Posterior vena cava (tissue), 2 donors: ENCODE measurements at regions of chr12 and their contacts with region 1.

Region 1: GRCh38 chr12:111699-112493 is 45.3 kb downstream of the IQSEC3 start:
- DNase-seq: peak; percentile 37

Region 2: DNA sequence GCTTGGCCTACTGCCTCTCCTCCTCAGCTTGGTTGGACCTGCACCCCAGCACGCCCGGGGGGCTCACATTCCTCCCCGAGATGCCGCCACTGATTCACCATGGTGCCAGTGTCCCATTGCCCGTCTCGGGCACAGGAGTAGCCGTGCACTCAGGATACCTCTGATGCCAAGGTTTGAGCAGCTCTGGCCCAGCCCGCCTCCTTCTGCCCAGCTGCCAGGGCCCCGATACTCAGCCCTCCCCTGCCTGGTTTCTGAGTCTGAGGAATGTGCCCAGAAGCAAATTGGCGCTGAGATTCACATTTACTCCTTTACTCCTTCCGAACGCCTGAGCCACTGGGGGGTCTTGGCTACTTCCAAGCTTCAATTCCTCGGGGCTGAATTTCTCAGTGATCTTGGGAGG is 487.9 kb after region 1 on chr12:
- intact Hi-C with region 1: loop called in 1 of 2 experiments (anchors 5 kb)
- DNase-seq: peak; percentile 49